Prostate gland (tissue), 2 donors: ENCODE measurements at regions of chr2 and their contacts with region 1.

Region 1: DNA sequence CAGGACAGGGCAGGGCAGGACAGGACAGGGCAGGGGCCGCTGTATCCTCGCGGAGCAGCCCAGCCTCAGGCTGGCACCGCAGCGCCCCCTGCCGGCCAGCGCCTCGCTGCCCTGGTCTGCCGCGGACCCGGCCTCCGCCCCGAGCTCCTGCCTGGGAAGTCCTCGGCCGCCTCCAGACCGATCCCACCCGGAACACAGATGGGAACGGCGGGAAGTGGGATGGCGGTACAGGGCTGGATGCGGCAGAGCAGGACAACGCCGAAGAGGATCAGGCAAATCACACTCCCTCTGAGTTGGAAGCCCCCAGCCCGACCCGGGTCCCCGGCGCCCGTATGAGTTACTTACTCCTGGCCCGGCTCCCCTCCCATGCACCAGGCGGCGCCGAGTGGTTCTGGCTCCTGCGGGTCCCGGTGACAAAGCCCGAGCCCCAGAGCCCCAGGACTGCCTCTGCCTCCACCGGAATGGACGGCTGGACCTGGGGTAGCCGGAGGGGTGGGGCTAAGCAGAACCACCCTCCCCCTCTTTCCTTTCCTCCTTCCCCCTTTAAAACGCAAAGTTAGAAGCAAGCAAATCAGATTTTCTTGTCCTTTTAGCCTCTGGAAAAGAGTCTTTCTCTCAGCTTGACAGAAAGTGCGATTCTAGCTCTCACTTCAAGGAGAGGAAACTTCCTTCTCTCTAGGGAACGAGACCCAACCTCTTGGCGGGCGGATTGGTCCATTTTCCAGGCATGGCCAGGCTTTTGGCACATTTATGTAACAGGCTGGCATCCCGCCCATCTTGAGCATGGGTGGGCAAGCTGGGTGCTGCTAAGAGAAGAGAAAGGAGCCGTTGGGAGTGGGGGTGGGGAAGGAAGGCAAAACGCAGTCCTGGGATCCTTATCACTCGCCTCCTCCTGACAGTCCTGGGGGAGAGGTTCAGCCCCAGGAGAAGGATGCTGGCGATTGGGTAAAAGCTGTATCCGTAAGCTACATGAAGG is at the start of gene TP53I3:
- DNase-seq: peak; percentile 84
- H3K4me3 ChIP-seq: peak within 1 kb of the TSS; percentile 45 to 59
- H3K27ac ChIP-seq: peak within 1 kb of the TSS; percentile 91 to 93
- H3K4me1 ChIP-seq: peaks cover 3% of the 10 kb centered on the region
- H3K27me3 ChIP-seq: no peaks in the 10 kb centered on the region
- CTCF ChIP-seq: peak; percentile 95 to 99 (median 96)
- POLR2A ChIP-seq: peak; percentile 60
- total RNA-seq, gene TP53I3: 16.2 to 26.2 TPM

Region 2: GRCh38 chr2:23824777-23825212 is 259.9 kb before region 1 on chr2:
- intact Hi-C with region 1: loop called (anchors 2 kb)
- DNase-seq: peak; percentile 25
- H3K4me3 ChIP-seq: no peak overlapping the region
- H3K27ac ChIP-seq: no peak overlapping the region
- H3K4me1 ChIP-seq: no peaks in the 10 kb centered on the region
- H3K27me3 ChIP-seq: no peaks in the 10 kb centered on the region
- CTCF ChIP-seq: peak; percentile 21 to 72 (median 63)
- POLR2A ChIP-seq: no peak

Region 3: DNA sequence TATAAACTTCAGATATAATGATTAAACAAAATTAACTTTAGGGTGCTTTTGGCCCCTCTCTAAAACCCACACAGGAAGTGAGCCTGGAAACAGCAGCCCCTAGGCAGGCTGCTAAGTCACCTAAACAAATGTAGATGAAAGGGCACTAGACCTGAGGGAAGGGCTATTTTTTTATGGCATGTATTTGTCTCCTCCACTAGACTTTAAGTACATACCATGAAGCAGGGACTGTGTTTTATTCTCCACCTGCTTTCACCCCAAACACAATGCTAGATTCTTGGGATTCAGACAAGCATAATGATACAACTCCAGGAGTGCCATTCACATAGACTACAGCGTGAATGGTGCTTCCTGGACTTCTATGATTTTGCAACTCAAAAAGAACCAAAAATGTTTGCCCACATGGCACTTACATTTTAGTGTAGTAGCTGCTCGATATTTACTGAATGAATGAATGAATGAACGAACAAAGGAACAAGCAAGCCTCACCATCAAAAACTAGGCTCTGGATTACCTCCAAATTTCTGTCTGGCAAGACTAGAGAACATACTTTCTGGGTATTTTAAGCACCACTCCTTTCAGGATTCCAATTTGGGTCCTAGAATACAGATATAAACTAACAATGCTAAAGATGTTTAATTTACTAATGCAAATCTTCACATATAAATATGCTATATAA is 167.8 kb before region 1 on chr2:
- intact Hi-C with region 1: no loop called
- DNase-seq: no peak
- H3K4me3 ChIP-seq: no peak overlapping the region
- H3K27ac ChIP-seq: no peak overlapping the region
- H3K4me1 ChIP-seq: no peaks in the 10 kb centered on the region
- H3K27me3 ChIP-seq: no peaks in the 10 kb centered on the region
- CTCF ChIP-seq: no peak
- POLR2A ChIP-seq: no peak

Region 4: GRCh38 chr2:23926750-23927571 is 157.7 kb before region 1 on chr2 and contains the start of gene ATAD2B:
- intact Hi-C with region 1: loop called (anchors 2 kb)
- DNase-seq: peak; percentile 91
- H3K4me3 ChIP-seq: peak within 1 kb of the TSS; percentile 78 to 81
- H3K27ac ChIP-seq: peak within 1 kb of the TSS; percentile 93 to 98
- H3K4me1 ChIP-seq: peaks cover 4% of the 10 kb centered on the region
- H3K27me3 ChIP-seq: no peaks in the 10 kb centered on the region
- CTCF ChIP-seq: peak; percentile 77 to 97 (median 90)
- POLR2A ChIP-seq: peak; percentile 85
- total RNA-seq, gene ATAD2B: 12.2 to 16.9 TPM

Region 5: DNA sequence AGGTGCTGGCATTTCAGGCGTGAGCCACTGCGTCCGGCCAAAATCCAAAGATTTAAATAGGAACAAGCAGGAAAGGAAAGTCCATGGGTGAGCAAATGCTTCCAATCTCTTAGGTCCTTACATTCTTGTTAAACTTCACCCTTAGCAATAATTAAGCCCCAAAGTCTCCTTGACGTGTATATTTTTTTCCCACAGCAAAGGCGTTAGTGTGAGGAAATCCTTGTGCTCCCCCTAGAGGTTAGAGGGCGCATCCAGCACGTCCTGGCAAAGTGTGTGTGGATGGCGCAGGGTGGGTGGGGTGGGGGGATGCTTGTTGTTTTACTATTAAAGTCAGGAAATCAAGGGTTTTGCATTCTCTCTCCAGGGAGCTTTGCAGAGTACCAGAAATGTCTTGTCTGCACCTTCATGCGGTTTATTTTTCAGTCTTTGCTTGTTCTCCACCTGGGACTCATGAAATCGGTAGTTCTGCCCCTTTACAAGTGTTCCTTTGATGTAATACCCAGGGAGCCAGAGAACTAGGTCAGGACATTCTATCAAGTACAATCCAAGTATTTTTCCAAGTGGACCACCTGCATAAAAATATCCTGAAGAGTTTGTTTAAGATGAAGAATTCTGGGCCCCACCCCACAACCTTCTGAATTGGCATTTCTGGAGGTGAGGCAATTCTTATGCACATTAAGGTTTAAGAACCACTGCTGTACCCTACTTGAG is 297.8 kb after region 1 on chr2:
- intact Hi-C with region 1: loop called (anchors 10 kb)
- DNase-seq: peak; percentile 34
- H3K4me3 ChIP-seq: no peak overlapping the region
- H3K27ac ChIP-seq: no peak overlapping the region
- H3K4me1 ChIP-seq: no peaks in the 10 kb centered on the region
- H3K27me3 ChIP-seq: no peaks in the 10 kb centered on the region
- CTCF ChIP-seq: peak; percentile 46 to 70 (median 52)
- POLR2A ChIP-seq: no peak